ENCODE measurements at regions of chr1 and their contacts with region 1.

Region 1: GRCh38 chr1:200488375-200489165 is 78.7 kb upstream of the ZNF281 start:
- DNase-seq: peak; percentile 91
- H3K4me3 Mint-ChIP-seq: no peak overlapping the region
- H3K27ac Mint-ChIP-seq: no peak overlapping the region
- H3K4me1 Mint-ChIP-seq: peaks cover 22% of the 10 kb centered on the region
- H3K27me3 Mint-ChIP-seq: no peaks in the 10 kb centered on the region
- CTCF ChIP-seq: peak; percentile 95

Region 2: DNA sequence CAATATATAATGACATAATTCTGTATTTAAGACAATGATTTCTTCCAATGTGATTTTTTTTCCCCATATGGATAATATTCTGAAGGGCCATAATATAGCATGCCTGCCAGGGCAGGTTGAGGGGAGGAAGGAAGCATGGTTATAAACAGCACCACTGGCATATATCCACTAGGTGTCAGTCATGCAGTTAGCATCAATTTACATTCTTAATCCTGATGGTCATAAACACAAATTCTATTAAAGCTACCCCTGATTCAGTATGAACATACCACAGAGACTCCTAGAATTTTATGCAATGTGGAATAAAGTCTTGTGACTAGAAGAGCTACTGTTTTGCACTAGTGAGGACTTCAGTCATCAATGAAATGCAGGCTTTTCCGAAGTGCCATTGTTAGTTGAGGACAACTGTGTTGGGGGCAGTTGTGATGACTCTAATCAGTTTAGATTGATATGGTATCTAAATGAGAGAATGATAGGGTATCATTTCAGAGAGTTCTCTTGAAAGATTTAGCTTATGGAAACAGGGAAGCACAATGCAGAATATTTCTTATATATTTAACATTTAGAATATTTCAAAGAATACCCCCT is 803.8 kb before region 1 on chr1:
- CTCF ChIA-PET with region 1: interaction called, 58 read pairs
- POLR2A ChIA-PET with region 1: interaction called, 6 read pairs
- intact Hi-C with region 1: loop called (anchors 1 kb)
- DNase-seq: peak; percentile 82
- H3K4me3 Mint-ChIP-seq: no peak overlapping the region
- H3K27ac Mint-ChIP-seq: no peak overlapping the region
- H3K4me1 Mint-ChIP-seq: peaks cover 18% of the 10 kb centered on the region
- H3K27me3 Mint-ChIP-seq: no peaks in the 10 kb centered on the region
- CTCF ChIP-seq: peak; percentile 96

Region 3: GRCh38 chr1:200139661-200140250 is 348.8 kb before region 1 on chr1:
- CTCF ChIA-PET with region 1: interaction called, 41 read pairs
- POLR2A ChIA-PET with region 1: interaction called, 3 read pairs
- intact Hi-C with region 1: loop called (anchors 1 kb)
- DNase-seq: peak; percentile 81
- H3K4me3 Mint-ChIP-seq: no peak overlapping the region
- H3K27ac Mint-ChIP-seq: no peak overlapping the region
- H3K4me1 Mint-ChIP-seq: no peaks in the 10 kb centered on the region
- H3K27me3 Mint-ChIP-seq: no peaks in the 10 kb centered on the region
- CTCF ChIP-seq: peak; percentile 83

Region 4: DNA sequence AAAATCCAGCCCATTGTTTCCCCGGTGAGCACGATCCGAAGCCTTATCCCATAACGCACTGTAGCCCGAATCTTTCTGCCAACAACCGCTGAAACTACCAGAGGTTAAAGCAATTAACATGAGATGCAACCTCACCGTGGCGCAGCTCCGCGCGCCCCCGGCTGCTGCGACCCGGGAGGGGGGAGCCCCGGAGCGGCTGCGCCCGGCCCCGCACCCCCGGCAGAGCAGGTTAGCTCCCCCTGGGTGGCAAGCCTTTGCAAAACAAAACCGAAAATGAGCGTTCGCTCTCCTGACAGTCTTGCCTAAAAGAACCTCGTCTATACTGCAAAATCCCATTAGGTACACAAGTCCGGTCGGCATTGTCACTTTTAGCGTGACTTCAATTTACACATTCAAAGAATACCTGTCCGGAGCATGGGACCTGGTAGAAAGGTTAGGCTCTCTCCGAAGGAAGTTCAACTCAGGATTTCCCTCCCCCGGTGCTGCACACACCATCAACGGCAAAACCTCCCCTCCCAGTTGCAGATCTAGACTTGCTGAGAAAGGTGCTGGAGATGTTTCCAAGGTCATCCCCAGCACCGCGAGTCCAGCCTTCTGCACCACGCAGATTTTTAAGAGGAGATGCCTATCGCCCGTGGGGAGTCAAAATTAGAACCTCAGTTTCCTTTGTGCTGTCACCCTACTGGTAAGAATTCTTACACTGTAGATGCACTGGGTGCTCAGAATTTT is 186.2 kb before region 1 on chr1:
- CTCF ChIA-PET with region 1: interaction called, 12 read pairs
- POLR2A ChIA-PET with region 1: no interaction called
- intact Hi-C with region 1: loop called (anchors 1 kb)
- DNase-seq: peak; percentile 49
- H3K4me3 Mint-ChIP-seq: peak overlapping the region; percentile 73
- H3K27ac Mint-ChIP-seq: no peak overlapping the region
- H3K4me1 Mint-ChIP-seq: peaks cover 2% of the 10 kb centered on the region
- H3K27me3 Mint-ChIP-seq: no peaks in the 10 kb centered on the region
- CTCF ChIP-seq: no peak

Region 5: DNA sequence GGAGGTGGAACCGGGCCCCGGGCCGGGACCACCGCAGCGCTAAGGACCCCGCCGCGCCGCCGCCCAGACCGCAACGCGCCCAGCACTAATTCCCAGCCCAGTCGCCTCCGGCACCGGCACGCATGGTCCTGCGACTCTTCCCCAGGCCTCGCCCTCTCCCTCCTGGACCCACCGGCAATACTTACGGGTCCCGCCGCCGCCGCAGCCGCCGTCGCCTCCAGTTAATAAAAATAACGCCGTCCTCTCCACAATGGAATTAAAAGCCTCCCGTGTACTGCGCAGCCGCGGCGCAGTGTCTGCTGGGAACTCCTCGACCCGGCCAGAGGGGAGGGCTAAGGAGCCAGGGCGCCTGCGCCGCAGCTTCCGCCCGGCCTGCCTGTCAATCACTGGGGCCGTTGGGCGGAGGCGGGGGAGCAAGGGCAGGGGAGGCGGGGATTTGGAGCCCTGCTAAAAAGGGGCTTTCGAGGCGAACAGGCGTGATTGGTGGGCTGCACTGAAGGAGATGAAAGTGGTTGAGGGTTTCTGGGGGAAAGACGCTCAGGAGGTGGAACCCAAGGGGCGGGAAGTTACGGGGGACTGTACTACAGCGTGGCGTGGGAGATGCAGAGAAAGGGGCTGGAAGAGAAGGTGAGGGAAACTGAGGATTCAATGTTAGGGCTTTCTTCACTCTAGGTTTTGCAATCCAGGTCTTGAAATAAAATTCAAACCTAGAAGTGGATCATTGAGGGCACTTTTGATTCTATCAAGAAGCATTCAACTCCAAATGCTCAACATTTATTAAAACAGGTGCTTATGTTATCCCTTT is 78.6 kb before region 1 on chr1 and contains the start of gene ZNF281:
- CTCF ChIA-PET with region 1: interaction called, 5 read pairs
- POLR2A ChIA-PET with region 1: interaction called, 81 read pairs
- intact Hi-C with region 1: loop called (anchors 1 kb)
- DNase-seq: peak; percentile 97
- H3K4me3 Mint-ChIP-seq: peak within 1 kb of the TSS; percentile 94
- H3K27ac Mint-ChIP-seq: peak within 1 kb of the TSS; percentile 93
- H3K4me1 Mint-ChIP-seq: peaks cover 60% of the 10 kb centered on the region
- H3K27me3 Mint-ChIP-seq: no peaks in the 10 kb centered on the region
- CTCF ChIP-seq: no peak
- total RNA-seq, gene ZNF281: 22.3 and 24.8 TPM in 2 replicates

Region 6: GRCh38 chr1:200442537-200443169 is 45.9 kb before region 1 on chr1:
- CTCF ChIA-PET with region 1: interaction called, 6 read pairs
- POLR2A ChIA-PET with region 1: interaction called, 4 read pairs
- intact Hi-C with region 1: loop called (anchors 2 kb)
- DNase-seq: peak; percentile 93
- H3K4me3 Mint-ChIP-seq: no peak overlapping the region
- H3K27ac Mint-ChIP-seq: no peak overlapping the region
- H3K4me1 Mint-ChIP-seq: peaks cover 10% of the 10 kb centered on the region
- H3K27me3 Mint-ChIP-seq: no peaks in the 10 kb centered on the region
- CTCF ChIP-seq: no peak

Region 7: DNA sequence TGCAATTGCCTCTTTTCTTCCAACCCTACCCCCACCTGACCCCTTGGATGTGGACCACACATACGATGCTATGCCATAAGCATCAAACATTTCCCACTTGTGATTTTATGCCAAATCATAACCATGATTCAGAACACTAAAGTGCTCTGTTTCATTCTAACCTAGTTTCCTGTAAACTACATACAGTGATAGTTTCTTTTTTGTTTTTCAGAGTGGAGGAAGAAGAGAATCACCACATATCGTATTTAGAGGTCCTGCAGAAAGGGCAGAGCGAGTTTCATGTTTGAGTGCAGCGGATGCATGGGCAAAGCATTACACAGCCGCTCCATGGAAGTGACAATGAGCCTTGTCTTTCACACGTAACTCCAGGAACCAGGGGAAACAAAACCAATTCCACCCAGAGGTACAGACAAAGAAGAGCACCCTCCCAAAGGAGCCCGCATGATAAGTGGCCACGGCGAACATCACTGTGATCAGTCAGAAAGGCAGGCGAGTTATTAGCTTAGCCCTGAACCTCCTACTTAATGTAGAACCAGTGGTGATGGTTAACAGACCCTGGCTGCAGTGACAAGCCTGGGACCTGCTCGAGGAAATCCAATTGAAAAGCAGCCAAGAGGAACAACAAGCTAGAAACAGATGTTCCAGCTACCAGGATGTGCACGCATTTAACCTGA is 14.7 kb before region 1 on chr1:
- CTCF ChIA-PET with region 1: interaction called, 11 read pairs
- POLR2A ChIA-PET with region 1: interaction called, 3 read pairs
- intact Hi-C with region 1: no loop called
- DNase-seq: no peak
- H3K4me3 Mint-ChIP-seq: no peak overlapping the region
- H3K27ac Mint-ChIP-seq: no peak overlapping the region
- H3K4me1 Mint-ChIP-seq: peaks cover 5% of the 10 kb centered on the region
- H3K27me3 Mint-ChIP-seq: no peaks in the 10 kb centered on the region
- CTCF ChIP-seq: no peak

Measured in MCF 10A (cell line).